ENCODE measurements at regions of chr4 and their contacts with region 1.

Region 1: GRCh38 chr4:150710770-150711375 is 128.9 kb downstream of the MAB21L2 start:
- DNase-seq: no peak
- ATAC-seq: no peak
- H3K4me3 ChIP-seq: no peak overlapping the region
- H3K27ac ChIP-seq: no peak overlapping the region
- H3K4me1 ChIP-seq: no peaks in the 10 kb centered on the region
- H3K27me3 ChIP-seq: no peaks in the 10 kb centered on the region
- CTCF ChIP-seq: no peak
- EP300 ChIP-seq: no peak
- POLR2A ChIP-seq: no peak
- RAD21 ChIP-seq: no peak

Region 2: GRCh38 chr4:150699599-150699998 is 11.3 kb before region 1 on chr4:
- CTCF ChIA-PET with region 1: interaction called, 5 read pairs
- POLR2A ChIA-PET with region 1: interaction called, 3 read pairs
- RAD21 ChIA-PET with region 1: no interaction called
- SMC1A ChIA-PET with region 1: interaction called, 14 read pairs
- in situ Hi-C with region 1: no loop called
- intact Hi-C with region 1: no loop called
- DNase-seq: no peak
- ATAC-seq: no peak
- H3K4me3 ChIP-seq: no peak overlapping the region
- H3K27ac ChIP-seq: no peak overlapping the region
- H3K4me1 ChIP-seq: no peaks in the 10 kb centered on the region
- H3K27me3 ChIP-seq: no peaks in the 10 kb centered on the region
- CTCF ChIP-seq: no peak
- EP300 ChIP-seq: no peak
- POLR2A ChIP-seq: no peak
- RAD21 ChIP-seq: no peak